ENCODE measurements at regions of chr6 and their contacts with region 1.

Region 1: GRCh38 chr6:40172272-40172671 is 238.0 kb upstream of the MOCS1 start:
- DNase-seq: no peak
- H3K4me3 ChIP-seq: no peak overlapping the region
- CTCF ChIP-seq: no peak
- POLR2A ChIP-seq: no peak

Region 2: DNA sequence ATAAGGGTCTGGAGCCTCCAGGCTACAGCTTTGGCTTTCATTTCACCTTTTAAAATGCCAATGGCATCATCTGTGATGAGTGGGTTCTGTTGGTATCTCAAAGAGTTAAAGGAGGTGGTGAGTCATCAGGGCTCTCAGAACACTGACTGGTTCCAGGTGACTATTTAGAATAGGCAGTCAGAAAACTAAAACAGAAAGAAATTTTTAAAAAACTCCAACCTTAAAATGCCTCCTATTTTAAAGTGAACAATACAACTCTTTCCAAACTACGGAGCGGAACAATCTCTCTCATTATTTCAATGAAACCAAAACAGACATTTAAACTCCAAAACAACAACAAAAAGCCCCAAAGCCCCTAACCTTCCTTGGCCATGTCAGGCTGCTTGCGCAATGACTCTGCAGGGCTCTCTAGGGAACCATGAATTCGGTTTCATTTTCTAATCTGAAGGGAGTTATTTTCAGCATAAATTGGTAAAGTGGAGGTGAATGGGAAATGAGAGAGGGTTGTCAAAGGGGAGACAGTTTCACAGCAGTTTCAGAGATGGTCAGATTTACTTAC is 642.0 kb before region 1 on chr6:
- intact Hi-C with region 1: no loop called
- DNase-seq: no peak
- H3K4me3 ChIP-seq: no peak overlapping the region
- CTCF ChIP-seq: no peak
- POLR2A ChIP-seq: no peak

Region 3: DNA sequence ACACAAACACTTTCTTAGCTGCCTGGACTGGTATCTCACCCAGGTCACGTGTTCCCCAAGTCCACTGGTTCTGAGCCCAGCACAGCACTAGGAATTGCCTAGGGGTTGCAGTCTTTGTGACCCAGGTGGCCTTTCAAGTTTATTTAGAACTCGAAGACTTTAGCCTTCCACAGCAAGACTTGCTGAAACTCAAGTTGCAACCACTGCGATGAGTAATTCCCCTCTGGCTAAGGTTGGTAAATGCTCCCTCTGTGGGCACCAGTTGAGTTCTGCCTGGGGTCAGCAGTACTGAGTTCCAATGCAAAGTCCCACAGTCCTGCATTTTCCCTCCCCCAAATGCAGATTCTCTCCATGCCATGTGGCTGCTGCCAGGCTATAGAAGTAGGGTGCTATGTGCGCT is 160.4 kb before region 1 on chr6:
- intact Hi-C with region 1: no loop called
- DNase-seq: no peak
- H3K4me3 ChIP-seq: no peak overlapping the region
- CTCF ChIP-seq: no peak
- POLR2A ChIP-seq: no peak

Region 4: GRCh38 chr6:40128149-40128548 is 44.1 kb before region 1 on chr6:
- intact Hi-C with region 1: loop called (anchors 1 kb)
- DNase-seq: no peak
- H3K4me3 ChIP-seq: no peak overlapping the region
- CTCF ChIP-seq: no peak
- POLR2A ChIP-seq: no peak

Region 5: GRCh38 chr6:40587240-40588069 is 415.2 kb after region 1 on chr6 and contains the start of gene LRFN2:
- intact Hi-C with region 1: no loop called
- DNase-seq: peak; percentile 24 to 93
- H3K4me3 ChIP-seq: peak within 1 kb of the TSS; percentile 15
- CTCF ChIP-seq: no peak
- POLR2A ChIP-seq: no peak
- total RNA-seq, gene LRFN2: 0.10 TPM in 1 of 4 donors, not detected in the others